CD4-positive, alpha-beta T cell (primary cell): ENCODE measurements at regions of chr5 and their contacts with region 1.

Region 1: GRCh38 chr5:115625579-115626444 is at the start of gene TMED7:
- DNase-seq: peak; percentile 98 to 100 (median 100)
- ATAC-seq: peak; percentile 88
- H3K4me3 ChIP-seq: peak within 1 kb of the TSS; percentile 82
- H3K4me3 Mint-ChIP-seq: no peak within 1 kb of the TSS
- H3K27ac ChIP-seq: peak within 1 kb of the TSS; percentile 86 to 91
- H3K27ac Mint-ChIP-seq: no peak within 1 kb of the TSS
- H3K4me1 ChIP-seq: peaks cover 24% of the 10 kb centered on the region
- H3K4me1 Mint-ChIP-seq: peaks cover 19% of the 10 kb centered on the region
- H3K27me3 ChIP-seq: no peaks in the 10 kb centered on the region
- H3K27me3 Mint-ChIP-seq: no peaks in the 10 kb centered on the region
- CTCF ChIP-seq: no peak
- total RNA-seq, gene TMED7: 50.4 to 56.7 TPM

Region 2: DNA sequence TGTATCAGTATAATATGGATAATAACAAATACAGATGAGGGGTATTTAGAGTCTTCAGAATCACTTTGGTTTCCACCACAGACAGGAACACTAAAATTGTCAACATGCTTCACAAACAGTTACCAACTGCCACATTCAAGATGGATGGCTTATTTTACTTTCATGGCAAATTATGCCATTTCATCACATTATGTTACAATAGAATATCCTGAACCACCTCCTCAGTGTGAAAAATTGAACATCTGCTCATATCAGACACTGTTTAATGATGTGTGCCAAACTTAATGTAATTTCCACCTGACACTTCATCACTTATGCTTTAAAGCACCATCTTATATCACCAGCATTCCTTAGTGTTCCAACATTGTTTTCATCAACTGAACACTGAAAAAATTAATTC is 906.5 kb before region 1 on chr5:
- CTCF ChIA-PET with region 1: no interaction called
- POLR2A ChIA-PET with region 1: no interaction called
- intact Hi-C with region 1: no loop called
- DNase-seq: no peak
- ATAC-seq: no peak
- H3K4me3 ChIP-seq: no peak overlapping the region
- H3K4me3 Mint-ChIP-seq: no peak overlapping the region
- H3K27ac ChIP-seq: no peak overlapping the region
- H3K27ac Mint-ChIP-seq: no peak overlapping the region
- H3K4me1 ChIP-seq: no peaks in the 10 kb centered on the region
- H3K4me1 Mint-ChIP-seq: no peaks in the 10 kb centered on the region
- H3K27me3 ChIP-seq: no peaks in the 10 kb centered on the region
- H3K27me3 Mint-ChIP-seq: no peaks in the 10 kb centered on the region
- CTCF ChIP-seq: no peak

Region 3: DNA sequence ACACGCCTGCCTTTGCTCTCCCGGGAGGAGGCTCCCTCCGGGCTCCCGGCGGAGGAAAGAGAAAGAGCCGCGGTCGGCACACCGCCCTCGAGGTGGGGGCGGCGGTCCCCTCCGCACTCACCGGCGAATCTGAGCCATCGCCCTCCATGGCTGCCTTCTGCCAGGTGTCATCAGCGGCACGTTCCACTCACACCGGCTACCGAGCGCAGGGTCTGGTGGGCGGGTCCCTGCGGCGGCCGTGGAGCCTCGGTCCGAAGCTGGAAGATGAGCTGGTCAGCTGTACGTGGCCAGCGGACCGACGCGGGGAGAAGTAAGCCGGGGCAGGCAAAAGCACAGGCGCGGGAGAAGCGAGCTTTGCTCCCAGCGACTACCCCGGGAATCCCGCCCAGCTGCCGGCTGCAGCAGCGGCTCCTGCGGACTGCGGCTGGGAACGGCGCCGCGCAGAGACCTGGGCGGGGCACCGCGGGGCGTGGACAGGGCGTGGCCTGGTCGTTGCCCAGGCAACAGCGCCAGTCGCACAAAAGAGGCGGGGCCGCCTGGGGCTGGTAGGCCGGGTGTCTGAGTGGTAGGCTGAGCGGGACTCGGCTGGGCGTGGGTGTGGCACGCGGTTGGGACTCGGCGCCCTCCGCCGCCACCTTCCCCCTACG is 456.2 kb before region 1 on chr5 and contains the start of gene TRIM36:
- CTCF ChIA-PET with region 1: no interaction called
- POLR2A ChIA-PET with region 1: no interaction called
- intact Hi-C with region 1: loop called in 1 of 2 experiments (anchors 5 kb)
- DNase-seq: peak; percentile 66 to 92 (median 82)
- ATAC-seq: peak; percentile 90
- H3K4me3 ChIP-seq: peak within 1 kb of the TSS; percentile 69
- H3K4me3 Mint-ChIP-seq: peak within 1 kb of the TSS; percentile 85
- H3K27ac ChIP-seq: no peak within 1 kb of the TSS
- H3K27ac Mint-ChIP-seq: no peak within 1 kb of the TSS
- H3K4me1 ChIP-seq: peaks cover 22% of the 10 kb centered on the region
- H3K4me1 Mint-ChIP-seq: peaks cover 15% of the 10 kb centered on the region
- H3K27me3 ChIP-seq: peaks cover 57 to 84% of the 10 kb centered on the region in 2 experiments
- H3K27me3 Mint-ChIP-seq: peaks cover 83% of the 10 kb centered on the region
- CTCF ChIP-seq: no peak
- total RNA-seq, gene TRIM36: 0.14 TPM in 1 of 2 experiments, not detected in the other

Region 4: GRCh38 chr5:115296124-115297022 is 329.4 kb before region 1 on chr5 and contains the start of gene CCDC112:
- CTCF ChIA-PET with region 1: no interaction called
- POLR2A ChIA-PET with region 1: interaction called, 12 read pairs
- intact Hi-C with region 1: no loop called
- DNase-seq: peak; percentile 57 to 92 (median 76)
- ATAC-seq: peak; percentile 77
- H3K4me3 ChIP-seq: peak within 1 kb of the TSS; percentile 55
- H3K4me3 Mint-ChIP-seq: peak within 1 kb of the TSS; percentile 87
- H3K27ac ChIP-seq: no peak within 1 kb of the TSS
- H3K27ac Mint-ChIP-seq: peak within 1 kb of the TSS; percentile 10
- H3K4me1 ChIP-seq: peaks cover 12% of the 10 kb centered on the region
- H3K4me1 Mint-ChIP-seq: peaks cover 11% of the 10 kb centered on the region
- H3K27me3 ChIP-seq: no peaks in the 10 kb centered on the region
- H3K27me3 Mint-ChIP-seq: no peaks in the 10 kb centered on the region
- CTCF ChIP-seq: no peak
- total RNA-seq, gene CCDC112: 3.1 to 3.9 TPM

Region 5: GRCh38 chr5:115601701-115602590 is 23.9 kb before region 1 on chr5 and contains the start of gene TICAM2:
- CTCF ChIA-PET with region 1: interaction called, 3 read pairs
- POLR2A ChIA-PET with region 1: interaction called, 19 read pairs
- intact Hi-C with region 1: no loop called
- DNase-seq: peak in 13 of 14 experiments; percentile 34 to 82 (median 42)
- ATAC-seq: peak; percentile 86
- H3K4me3 ChIP-seq: peak within 1 kb of the TSS; percentile 61
- H3K4me3 Mint-ChIP-seq: peak within 1 kb of the TSS; percentile 84
- H3K27ac ChIP-seq: peak within 1 kb of the TSS in 1 of 2 donors; percentile 22
- H3K27ac Mint-ChIP-seq: peak within 1 kb of the TSS; percentile 71
- H3K4me1 ChIP-seq: peaks cover 14% of the 10 kb centered on the region
- H3K4me1 Mint-ChIP-seq: peaks cover 33% of the 10 kb centered on the region
- H3K27me3 ChIP-seq: no peaks in the 10 kb centered on the region
- H3K27me3 Mint-ChIP-seq: no peaks in the 10 kb centered on the region
- CTCF ChIP-seq: no peak
- total RNA-seq, gene TICAM2: 0.30 to 0.50 TPM

Region 6: GRCh38 chr5:116084871-116085715 is 459.3 kb after region 1 on chr5 and contains the start of gene COMMD10:
- CTCF ChIA-PET with region 1: no interaction called
- POLR2A ChIA-PET with region 1: interaction called, 3 read pairs
- intact Hi-C with region 1: loop called (anchors 5 kb)
- DNase-seq: peak; percentile 58 to 93 (median 72)
- ATAC-seq: peak; percentile 90
- H3K4me3 ChIP-seq: peak within 1 kb of the TSS; percentile 86
- H3K4me3 Mint-ChIP-seq: peak within 1 kb of the TSS; percentile 99
- H3K27ac ChIP-seq: peak within 1 kb of the TSS; percentile 81 to 82
- H3K27ac Mint-ChIP-seq: peak within 1 kb of the TSS; percentile 99
- H3K4me1 ChIP-seq: peaks cover 16% of the 10 kb centered on the region
- H3K4me1 Mint-ChIP-seq: peaks cover 76% of the 10 kb centered on the region
- H3K27me3 ChIP-seq: no peaks in the 10 kb centered on the region
- H3K27me3 Mint-ChIP-seq: no peaks in the 10 kb centered on the region
- CTCF ChIP-seq: no peak
- total RNA-seq, gene COMMD10: 26.0 to 27.6 TPM